Left ventricle myocardium superior (tissue), 1 donor: ENCODE measurements at regions of chr6 and their contacts with region 1.

Region 1: DNA sequence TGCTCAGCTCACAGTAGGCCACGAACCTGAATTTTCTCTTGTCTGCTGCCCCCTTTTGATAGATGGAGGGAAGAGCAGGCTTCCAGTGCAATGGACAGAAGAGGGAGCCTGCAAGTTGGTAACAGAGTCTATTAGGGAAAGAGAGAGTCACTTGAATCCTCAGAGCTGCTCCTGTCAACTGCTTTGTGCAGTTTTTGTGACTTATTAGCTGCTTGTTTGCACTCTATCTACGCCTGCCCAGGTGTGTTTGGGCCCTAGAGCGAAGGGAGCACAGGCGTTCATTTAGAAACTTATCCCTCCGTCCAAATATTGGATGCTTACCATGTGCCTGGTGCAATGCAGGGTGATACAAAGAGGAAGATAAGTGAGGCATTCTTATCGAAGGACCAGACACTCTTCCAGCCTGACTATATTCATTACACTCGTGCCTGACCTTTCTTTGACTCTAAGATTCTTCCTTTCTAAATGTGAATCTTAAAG is 11.6 kb upstream of the SLC2A12 start:
- DNase-seq: no peak
- ATAC-seq: peak; percentile 87

Region 2: DNA sequence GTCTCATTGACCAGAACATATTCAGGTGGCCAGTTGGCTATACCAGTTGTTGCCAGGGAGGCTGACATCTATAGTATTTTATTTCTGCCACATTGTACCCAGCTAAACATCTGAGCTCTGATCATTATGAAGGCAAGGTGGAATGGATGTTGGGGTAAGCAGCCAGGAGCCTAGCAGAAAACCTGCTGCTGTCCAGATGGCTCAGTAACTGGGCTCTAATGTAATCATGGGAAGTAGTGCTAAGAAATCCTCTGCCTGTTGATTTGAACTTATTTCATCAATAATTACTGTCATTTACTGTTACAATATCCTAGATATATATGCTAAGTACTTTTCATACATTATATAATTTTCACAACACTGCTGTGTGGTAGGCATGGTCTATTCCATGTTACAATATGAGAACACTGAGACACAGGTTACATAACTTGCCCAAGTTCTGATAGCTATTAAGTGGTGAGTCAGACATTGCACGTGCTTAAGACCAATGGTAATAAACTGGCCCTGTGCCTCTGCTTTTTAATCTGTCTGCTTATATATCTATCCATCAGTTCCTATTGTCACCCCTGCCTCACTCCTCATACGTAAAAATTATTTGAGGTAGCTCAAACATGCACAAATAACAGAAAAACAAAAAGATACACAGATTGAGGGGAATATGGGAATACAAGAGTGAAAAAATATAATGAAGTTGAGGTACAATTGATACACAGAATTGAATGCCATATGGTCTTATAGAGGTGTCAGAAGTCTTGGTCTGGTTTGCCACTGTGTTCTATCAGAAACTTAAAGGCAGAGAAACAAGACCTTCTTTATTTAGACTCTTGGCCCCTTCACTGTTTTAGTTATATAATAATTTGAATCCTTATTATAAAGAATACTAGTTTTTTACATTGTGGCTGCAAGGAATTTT is 85.8 kb before region 1 on chr6:
- intact Hi-C with region 1: loop called (anchors 5 kb)
- DNase-seq: no peak
- ATAC-seq: peak; percentile 91